ENCODE measurements at regions of chr20 and their contacts with region 1.

Region 1: GRCh38 chr20:22684072-22684762 is 99.8 kb upstream of the FOXA2 start:
- DNase-seq: peak in 1 of 2 donors; percentile 82
- H3K4me3 ChIP-seq: no peak overlapping the region
- H3K27ac ChIP-seq: no peak overlapping the region
- H3K4me1 ChIP-seq: no peaks in the 10 kb centered on the region
- H3K27me3 ChIP-seq: no peaks in the 10 kb centered on the region
- CTCF ChIP-seq: peak; percentile 77 to 86 (median 80)

Region 2: DNA sequence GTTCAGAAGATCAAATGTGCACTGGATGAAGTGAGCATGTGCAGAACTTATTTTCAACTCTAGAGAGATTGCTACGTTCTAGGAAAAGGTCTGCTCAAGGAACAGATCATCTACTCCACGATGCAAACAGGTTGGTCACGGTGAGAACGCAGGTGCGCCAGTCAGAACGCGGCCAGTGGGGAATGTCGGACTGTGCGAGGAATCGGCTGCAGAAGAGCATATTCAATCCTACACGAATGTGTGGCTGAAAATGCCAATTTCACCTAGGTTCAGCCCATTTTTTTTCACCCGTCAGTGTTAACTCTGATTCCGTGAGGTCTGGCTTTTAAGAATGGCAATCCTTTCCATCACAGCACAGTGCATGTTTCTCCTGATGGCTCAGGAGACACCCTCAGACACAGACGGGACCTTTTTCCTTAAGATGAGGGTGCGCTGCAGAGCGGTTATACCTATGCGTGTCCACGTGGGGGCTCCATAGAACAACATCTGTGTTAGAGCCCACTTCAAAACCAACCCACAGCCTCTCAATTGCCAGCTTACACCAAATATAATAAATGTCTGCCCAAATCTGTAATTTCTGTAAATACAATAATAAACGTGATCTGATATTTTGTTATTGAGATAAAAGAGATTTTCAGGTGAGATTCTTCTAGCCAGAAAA is 350.2 kb before region 1 on chr20:
- intact Hi-C with region 1: loop called (anchors 1 kb)
- DNase-seq: no peak
- H3K4me3 ChIP-seq: no peak overlapping the region
- H3K27ac ChIP-seq: no peak overlapping the region
- H3K4me1 ChIP-seq: no peaks in the 10 kb centered on the region
- H3K27me3 ChIP-seq: no peaks in the 10 kb centered on the region
- CTCF ChIP-seq: peak; percentile 36 to 75 (median 67)

Region 3: GRCh38 chr20:22339091-22339881 is 344.9 kb before region 1 on chr20:
- intact Hi-C with region 1: loop called (anchors 1 kb)
- DNase-seq: peak in 1 of 2 donors; percentile 72
- H3K4me3 ChIP-seq: peak overlapping the region in 1 of 2 donors; percentile 47
- H3K27ac ChIP-seq: peak overlapping the region in 1 of 2 donors; percentile 11
- H3K4me1 ChIP-seq: peaks cover 0 to 9% of the 10 kb centered on the region in 2 donors
- H3K27me3 ChIP-seq: no peaks in the 10 kb centered on the region
- CTCF ChIP-seq: peak; percentile 66 to 75 (median 68)